ENCODE measurements at regions of chr5 and their contacts with region 1.

Region 1: GRCh38 chr5:36870399-36871040 is 6.0 kb upstream of the NIPBL start:
- DNase-seq: peak in 4 of 5 donors; percentile 68 to 73 (median 70)
- H3K4me3 ChIP-seq: no peak overlapping the region
- H3K4me3 Mint-ChIP-seq: peak overlapping the region in 4 of 8 donors; percentile 2 to 59 (median 24)
- H3K27ac ChIP-seq: no peak overlapping the region
- H3K27ac Mint-ChIP-seq: peak overlapping the region in 4 of 7 donors; percentile 36 to 68 (median 55)
- H3K4me1 ChIP-seq: peaks cover 48% of the 10 kb centered on the region
- H3K4me1 Mint-ChIP-seq: peaks cover 22 to 37% (median 28%) of the 10 kb centered on the region in 4 donors
- H3K27me3 ChIP-seq: no peaks in the 10 kb centered on the region
- H3K27me3 Mint-ChIP-seq: no peaks in the 10 kb centered on the region

Region 2: GRCh38 chr5:35003018-35003957 is 1867.2 kb before region 1 on chr5:
- CTCF ChIA-PET with region 1: no interaction called
- POLR2A ChIA-PET with region 1: no interaction called
- intact Hi-C with region 1: no loop called
- DNase-seq: peak in 4 of 5 donors; percentile 22 to 46 (median 32)
- H3K4me3 ChIP-seq: no peak overlapping the region
- H3K4me3 Mint-ChIP-seq: no peak overlapping the region
- H3K27ac ChIP-seq: no peak overlapping the region
- H3K27ac Mint-ChIP-seq: no peak overlapping the region
- H3K4me1 ChIP-seq: no peaks in the 10 kb centered on the region
- H3K4me1 Mint-ChIP-seq: no peaks in the 10 kb centered on the region
- H3K27me3 ChIP-seq: no peaks in the 10 kb centered on the region
- H3K27me3 Mint-ChIP-seq: peaks cover 14 to 22% of the 10 kb centered on the region in 2 donors

Region 3: GRCh38 chr5:36690041-36690961 is 180.2 kb before region 1 on chr5:
- CTCF ChIA-PET with region 1: interaction called, 5 read pairs
- POLR2A ChIA-PET with region 1: no interaction called
- intact Hi-C with region 1: loop called (anchors 1 kb)
- DNase-seq: peak; percentile 28 to 62 (median 44)
- H3K4me3 ChIP-seq: peak overlapping the region in 1 of 2 donors; percentile 60
- H3K4me3 Mint-ChIP-seq: peak overlapping the region; percentile 74 to 89 (median 83)
- H3K27ac ChIP-seq: no peak overlapping the region
- H3K27ac Mint-ChIP-seq: peak overlapping the region in 3 of 7 donors; percentile 1 to 78 (median 24)
- H3K4me1 ChIP-seq: peaks cover 12% of the 10 kb centered on the region
- H3K4me1 Mint-ChIP-seq: peaks cover 6 to 13% (median 9%) of the 10 kb centered on the region in 4 donors
- H3K27me3 ChIP-seq: no peaks in the 10 kb centered on the region
- H3K27me3 Mint-ChIP-seq: peaks cover 9 to 22% of the 10 kb centered on the region in 2 donors

Region 4: GRCh38 chr5:36739751-36740221 is 130.7 kb before region 1 on chr5:
- CTCF ChIA-PET with region 1: interaction called, 10 read pairs
- POLR2A ChIA-PET with region 1: no interaction called
- intact Hi-C with region 1: loop called (anchors 1 kb)
- DNase-seq: peak; percentile 51 to 62 (median 59)
- H3K4me3 ChIP-seq: no peak overlapping the region
- H3K4me3 Mint-ChIP-seq: no peak overlapping the region
- H3K27ac ChIP-seq: no peak overlapping the region
- H3K27ac Mint-ChIP-seq: no peak overlapping the region
- H3K4me1 ChIP-seq: peaks cover 11% of the 10 kb centered on the region
- H3K4me1 Mint-ChIP-seq: peaks cover 0 to 9% (median 4%) of the 10 kb centered on the region in 4 donors
- H3K27me3 ChIP-seq: peaks cover 9% of the 10 kb centered on the region
- H3K27me3 Mint-ChIP-seq: peaks cover 23 to 40% of the 10 kb centered on the region in 2 donors

Region 5: DNA sequence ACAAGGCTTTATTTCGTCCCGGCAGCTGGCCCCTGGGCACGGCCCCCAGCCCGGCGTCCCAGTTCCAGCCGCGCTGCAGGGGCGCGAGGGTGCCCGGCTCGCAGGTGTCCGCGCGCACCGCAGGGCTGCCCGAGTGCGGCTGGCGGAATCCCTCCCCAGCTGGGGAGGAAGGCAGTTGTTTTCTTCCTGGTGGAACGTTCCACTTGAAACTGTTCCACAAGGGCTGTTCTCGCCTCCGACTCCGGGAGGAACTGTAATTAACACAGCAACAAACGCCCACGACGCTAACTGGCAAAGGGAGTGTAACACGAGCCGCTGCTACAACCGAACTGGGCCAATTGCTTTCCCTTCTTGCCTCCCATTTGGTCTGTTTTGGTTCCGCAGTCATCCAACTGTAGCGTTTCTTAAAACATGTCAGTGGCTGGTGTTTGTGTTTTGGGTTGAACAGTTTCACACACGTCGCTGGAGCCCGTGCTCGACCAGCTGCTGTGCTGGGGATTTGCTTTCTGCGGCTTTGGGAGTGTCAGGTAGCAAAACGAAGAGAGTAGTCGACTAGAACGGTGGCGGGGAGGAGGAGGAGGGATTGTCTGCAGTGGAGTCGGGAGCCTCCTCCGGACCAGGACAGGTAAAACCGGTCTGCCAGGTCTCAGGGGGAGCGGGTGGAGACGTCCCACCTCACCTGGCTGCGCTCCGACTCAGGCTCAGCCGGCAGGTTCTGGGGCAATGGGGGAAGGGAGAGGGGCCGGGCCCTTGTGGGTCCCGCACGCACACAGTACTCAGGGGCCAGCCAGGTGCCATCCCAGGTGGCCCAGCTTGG is 125.5 kb before region 1 on chr5:
- CTCF ChIA-PET with region 1: interaction called, 10 read pairs
- POLR2A ChIA-PET with region 1: no interaction called
- intact Hi-C with region 1: loop called (anchors 1 kb)
- DNase-seq: peak in 4 of 5 donors; percentile 14 to 19 (median 14)
- H3K4me3 ChIP-seq: peak overlapping the region in 1 of 2 donors; percentile 48
- H3K4me3 Mint-ChIP-seq: peak overlapping the region; percentile 81 to 93 (median 86)
- H3K27ac ChIP-seq: no peak overlapping the region
- H3K27ac Mint-ChIP-seq: peak overlapping the region in 2 of 7 donors; percentile 25 to 57
- H3K4me1 ChIP-seq: peaks cover 15% of the 10 kb centered on the region
- H3K4me1 Mint-ChIP-seq: peaks cover 8 to 12% (median 10%) of the 10 kb centered on the region in 4 donors
- H3K27me3 ChIP-seq: peaks cover 9% of the 10 kb centered on the region
- H3K27me3 Mint-ChIP-seq: peaks cover 24 to 50% of the 10 kb centered on the region in 2 donors

Region 6: GRCh38 chr5:37234288-37234687 is 363.8 kb after region 1 on chr5:
- CTCF ChIA-PET with region 1: no interaction called
- POLR2A ChIA-PET with region 1: no interaction called
- intact Hi-C with region 1: no loop called
- DNase-seq: no peak
- H3K4me3 ChIP-seq: no peak overlapping the region
- H3K4me3 Mint-ChIP-seq: no peak overlapping the region
- H3K27ac ChIP-seq: no peak overlapping the region
- H3K27ac Mint-ChIP-seq: no peak overlapping the region
- H3K4me1 ChIP-seq: no peaks in the 10 kb centered on the region
- H3K4me1 Mint-ChIP-seq: no peaks in the 10 kb centered on the region
- H3K27me3 ChIP-seq: no peaks in the 10 kb centered on the region
- H3K27me3 Mint-ChIP-seq: no peaks in the 10 kb centered on the region